ENCODE measurements at regions of chr18 and their contacts with region 1.

Region 1: DNA sequence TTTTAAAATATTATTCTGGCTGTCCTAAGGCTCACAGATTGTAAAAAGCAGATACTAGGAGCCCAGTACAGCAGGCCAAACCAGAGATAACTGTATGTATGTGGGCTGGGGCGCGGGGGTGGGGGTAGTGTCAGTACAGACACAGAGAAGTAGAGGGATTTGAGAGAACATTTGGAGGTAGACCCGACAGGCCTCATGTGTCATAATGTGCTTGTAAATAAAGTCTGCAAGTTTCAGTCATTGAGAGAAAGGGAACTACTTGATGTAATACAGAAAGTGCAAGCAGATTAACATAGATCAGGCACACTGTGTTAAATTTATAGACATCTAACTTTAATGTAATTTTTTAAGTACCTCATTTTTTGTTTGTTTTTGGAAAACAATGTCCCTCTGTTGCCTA is 7.4 kb upstream of the POLI start:
- DNase-seq: no peak
- H3K4me3 Mint-ChIP-seq: no peak overlapping the region
- H3K27ac Mint-ChIP-seq: peak overlapping the region; percentile 95
- H3K4me1 Mint-ChIP-seq: peaks cover 45% of the 10 kb centered on the region
- H3K27me3 Mint-ChIP-seq: no peaks in the 10 kb centered on the region

Region 2: DNA sequence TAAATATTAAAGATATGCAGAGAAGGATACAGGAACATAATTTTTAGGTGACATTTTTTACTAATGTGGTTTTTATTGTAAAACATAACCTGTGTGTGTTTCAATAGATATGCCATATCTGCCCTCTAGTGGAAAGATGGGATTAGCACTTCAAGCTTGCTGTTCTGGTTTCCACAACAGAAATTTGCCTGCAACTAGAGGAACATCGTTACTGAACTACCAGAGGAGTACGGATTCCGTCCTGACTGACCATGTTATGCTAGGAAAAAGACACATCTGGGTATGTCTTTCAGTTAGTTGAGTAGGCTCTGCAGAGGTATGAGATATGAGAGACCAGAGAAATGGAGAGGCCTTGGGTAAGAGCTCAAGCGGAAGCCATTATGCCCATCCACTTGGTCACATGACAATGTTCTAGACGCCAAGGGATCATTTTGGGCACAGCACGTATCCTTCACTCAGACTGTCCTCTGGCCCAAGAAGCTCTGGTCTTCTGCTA is 142.3 kb before region 1 on chr18:
- intact Hi-C with region 1: no loop called
- DNase-seq: peak; percentile 9
- H3K4me3 Mint-ChIP-seq: peak overlapping the region; percentile 4
- H3K27ac Mint-ChIP-seq: no peak overlapping the region
- H3K4me1 Mint-ChIP-seq: peaks cover 7% of the 10 kb centered on the region
- H3K27me3 Mint-ChIP-seq: peaks cover 15% of the 10 kb centered on the region

Region 3: DNA sequence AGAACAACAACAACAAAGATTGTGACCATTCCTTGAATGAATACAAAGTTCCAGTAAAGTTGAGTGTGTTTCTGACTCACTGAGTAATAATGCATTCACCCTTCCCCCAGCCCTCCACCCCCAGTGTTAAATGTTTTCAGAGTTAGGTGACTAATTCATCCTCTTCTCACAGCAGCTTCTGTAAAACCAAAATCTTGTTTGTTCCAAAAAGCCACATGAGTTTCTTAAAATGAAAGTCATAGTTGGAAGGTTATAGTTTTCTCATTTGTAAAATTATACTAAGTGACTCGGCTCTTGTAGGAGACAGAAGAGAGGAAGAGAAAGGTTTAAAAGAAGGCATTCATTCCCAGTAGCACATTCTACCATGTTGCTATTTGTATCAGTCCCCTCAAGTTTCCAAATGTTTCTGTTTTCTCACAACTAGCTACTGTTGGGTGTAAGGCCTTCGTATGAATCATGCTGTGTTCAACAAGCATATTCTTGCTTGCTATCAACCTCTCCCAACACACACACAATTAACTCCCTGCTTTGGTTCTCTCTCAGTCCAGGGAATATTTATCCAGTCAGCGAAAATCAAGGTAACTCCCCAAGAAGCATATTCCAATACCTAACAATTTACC is 112.7 kb before region 1 on chr18:
- intact Hi-C with region 1: loop called (anchors 1 kb)
- DNase-seq: no peak
- H3K4me3 Mint-ChIP-seq: peak overlapping the region; percentile 43
- H3K27ac Mint-ChIP-seq: peak overlapping the region; percentile 94
- H3K4me1 Mint-ChIP-seq: peaks cover 48% of the 10 kb centered on the region
- H3K27me3 Mint-ChIP-seq: no peaks in the 10 kb centered on the region

Region 4: GRCh38 chr18:54181856-54182602 is 79.9 kb before region 1 on chr18:
- intact Hi-C with region 1: loop called (anchors 1 kb)
- DNase-seq: no peak
- H3K4me3 Mint-ChIP-seq: no peak overlapping the region
- H3K27ac Mint-ChIP-seq: no peak overlapping the region
- H3K4me1 Mint-ChIP-seq: peaks cover 11% of the 10 kb centered on the region
- H3K27me3 Mint-ChIP-seq: no peaks in the 10 kb centered on the region

Region 5: GRCh38 chr18:54224379-54225014 is 37.4 kb before region 1 on chr18 and contains the start of gene MBD2:
- intact Hi-C with region 1: loop called (anchors 1 kb)
- DNase-seq: peak; percentile 91
- H3K4me3 Mint-ChIP-seq: peak within 1 kb of the TSS; percentile 98
- H3K27ac Mint-ChIP-seq: peak within 1 kb of the TSS; percentile 95
- H3K4me1 Mint-ChIP-seq: peaks cover 44% of the 10 kb centered on the region
- H3K27me3 Mint-ChIP-seq: no peaks in the 10 kb centered on the region
- total RNA-seq, gene MBD2: 165 and 196 TPM in 2 replicates

Region 6: DNA sequence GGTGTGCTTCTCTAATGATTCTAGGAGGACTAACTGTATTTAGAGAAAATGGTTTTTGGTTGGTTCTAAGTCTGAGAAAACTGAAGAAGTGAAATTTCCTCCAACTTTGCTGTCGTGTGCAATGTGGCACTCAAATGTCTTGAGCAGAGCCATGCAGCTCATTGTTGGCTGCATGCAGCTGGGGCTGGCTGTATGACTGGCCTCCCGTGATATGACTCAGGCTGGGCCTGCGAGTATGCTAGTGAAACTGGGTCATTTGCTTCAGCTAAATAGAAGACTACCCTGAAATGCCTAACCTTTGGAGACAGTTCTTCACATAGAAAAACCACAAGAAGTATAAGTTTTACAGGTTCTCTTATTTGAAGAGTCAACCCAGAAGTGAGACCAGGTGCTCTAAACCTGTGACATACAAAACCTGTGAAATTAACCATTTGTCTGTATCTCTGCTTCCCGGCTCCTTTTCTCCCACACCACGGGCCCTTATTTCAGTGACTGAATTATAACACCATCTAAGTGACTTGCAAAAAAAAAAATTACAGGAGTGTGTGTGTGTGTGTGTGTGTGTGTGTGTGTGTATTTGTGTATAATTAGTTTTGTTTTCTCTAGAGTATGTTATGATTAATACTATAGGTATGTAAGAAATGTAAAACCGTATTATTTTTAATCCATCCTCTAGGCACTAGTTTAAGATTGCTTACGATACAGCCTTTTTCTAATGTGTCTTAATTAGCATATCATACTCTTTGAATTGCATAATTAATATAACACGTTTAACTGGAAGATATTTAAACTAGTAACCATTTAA is 23.3 kb after region 1 on chr18:
- intact Hi-C with region 1: loop called (anchors 1 kb)
- DNase-seq: peak; percentile 44
- H3K4me3 Mint-ChIP-seq: no peak overlapping the region
- H3K27ac Mint-ChIP-seq: peak overlapping the region; percentile 79
- H3K4me1 Mint-ChIP-seq: peaks cover 34% of the 10 kb centered on the region
- H3K27me3 Mint-ChIP-seq: no peaks in the 10 kb centered on the region

Region 7: DNA sequence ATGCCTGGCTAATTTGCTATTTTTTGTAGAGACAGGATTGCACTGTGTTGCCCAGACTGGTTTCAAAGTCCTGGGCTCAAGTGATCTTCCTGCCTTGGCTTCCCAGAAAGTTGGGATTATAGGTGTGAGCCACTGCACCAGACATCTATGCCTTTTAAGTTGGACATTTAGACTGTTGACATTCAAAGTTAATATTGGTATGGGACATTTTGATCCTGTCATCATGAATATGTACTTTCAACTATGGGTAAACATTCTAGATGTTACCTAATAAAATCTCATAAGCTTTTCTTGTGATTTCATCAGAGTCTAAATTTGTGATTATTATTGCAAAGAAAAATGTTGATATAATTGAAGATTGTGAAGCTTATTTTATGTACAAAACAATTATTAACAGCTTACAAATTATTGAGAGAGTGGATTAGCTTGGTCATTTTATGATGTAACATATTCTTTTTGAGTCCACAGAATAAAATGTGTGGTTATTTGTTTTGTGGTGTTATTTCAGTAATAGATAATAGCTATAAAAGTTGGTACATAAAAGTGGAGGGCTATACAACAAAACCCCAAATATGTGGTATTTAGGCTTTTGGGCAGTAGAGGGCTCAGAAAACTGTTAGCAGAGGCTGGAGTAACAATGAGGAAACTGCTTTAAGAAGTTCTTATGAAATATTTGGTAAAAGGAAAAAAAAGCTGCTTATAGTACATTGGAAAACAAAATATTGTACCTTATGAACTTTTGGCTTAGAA is 54.4 kb after region 1 on chr18:
- intact Hi-C with region 1: no loop called
- DNase-seq: no peak
- H3K4me3 Mint-ChIP-seq: no peak overlapping the region
- H3K27ac Mint-ChIP-seq: no peak overlapping the region
- H3K4me1 Mint-ChIP-seq: peaks cover 4% of the 10 kb centered on the region
- H3K27me3 Mint-ChIP-seq: peaks cover 35% of the 10 kb centered on the region

Region 8: DNA sequence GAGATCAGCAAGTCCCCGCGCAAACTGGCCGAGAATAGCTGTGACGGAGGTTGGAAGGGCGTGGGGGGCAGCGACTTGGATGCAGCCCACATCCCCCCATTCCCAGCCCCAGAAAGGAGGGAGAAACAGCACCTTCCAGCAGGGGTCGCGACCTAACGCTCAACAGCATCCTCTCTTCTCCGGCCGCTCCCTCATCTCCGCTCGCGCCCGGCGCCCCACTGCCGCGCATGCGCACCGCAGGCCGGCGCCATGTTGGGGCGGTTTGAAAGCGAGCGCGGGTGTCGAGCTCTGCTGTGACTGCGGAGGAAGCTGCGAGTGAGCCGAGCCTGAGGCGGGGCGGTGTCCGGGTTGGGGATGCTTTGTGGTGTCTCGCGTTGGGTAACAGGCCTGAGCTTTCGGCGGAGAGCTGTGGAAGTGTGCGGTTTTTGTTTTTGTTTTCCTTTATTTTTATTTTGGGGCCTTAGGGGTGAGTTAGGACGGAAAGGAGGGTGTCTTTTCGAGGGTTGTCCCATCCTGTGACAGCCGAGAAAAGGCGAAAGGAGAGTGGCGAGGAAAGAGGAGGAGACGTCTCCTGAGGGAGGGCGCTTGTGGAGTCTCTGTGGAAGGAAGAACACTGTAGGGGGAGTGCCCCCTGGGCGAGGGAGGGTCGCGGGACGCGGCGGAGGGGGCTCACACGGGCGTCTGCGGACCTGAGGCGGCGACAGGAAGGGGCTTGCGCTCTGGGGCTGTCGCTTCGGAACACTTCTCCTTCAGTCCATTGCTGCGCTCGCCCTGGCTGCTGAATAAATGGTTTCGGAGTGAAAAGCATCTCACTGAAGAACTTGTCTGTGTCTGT is 96.0 kb after region 1 on chr18 and contains the starts of genes C18orf54 and STARD6:
- intact Hi-C with region 1: loop called (anchors 1 kb)
- DNase-seq: peak; percentile 90
- H3K4me3 Mint-ChIP-seq: peak within 1 kb of the TSS; percentile 99
- H3K27ac Mint-ChIP-seq: peak within 1 kb of the TSS; percentile 97
- H3K4me1 Mint-ChIP-seq: peaks cover 21% of the 10 kb centered on the region
- H3K27me3 Mint-ChIP-seq: no peaks in the 10 kb centered on the region
- total RNA-seq, gene C18orf54: 10.4 and 10.9 TPM in 2 replicates
- total RNA-seq, gene STARD6: not detected in 2 replicates

Region 9: DNA sequence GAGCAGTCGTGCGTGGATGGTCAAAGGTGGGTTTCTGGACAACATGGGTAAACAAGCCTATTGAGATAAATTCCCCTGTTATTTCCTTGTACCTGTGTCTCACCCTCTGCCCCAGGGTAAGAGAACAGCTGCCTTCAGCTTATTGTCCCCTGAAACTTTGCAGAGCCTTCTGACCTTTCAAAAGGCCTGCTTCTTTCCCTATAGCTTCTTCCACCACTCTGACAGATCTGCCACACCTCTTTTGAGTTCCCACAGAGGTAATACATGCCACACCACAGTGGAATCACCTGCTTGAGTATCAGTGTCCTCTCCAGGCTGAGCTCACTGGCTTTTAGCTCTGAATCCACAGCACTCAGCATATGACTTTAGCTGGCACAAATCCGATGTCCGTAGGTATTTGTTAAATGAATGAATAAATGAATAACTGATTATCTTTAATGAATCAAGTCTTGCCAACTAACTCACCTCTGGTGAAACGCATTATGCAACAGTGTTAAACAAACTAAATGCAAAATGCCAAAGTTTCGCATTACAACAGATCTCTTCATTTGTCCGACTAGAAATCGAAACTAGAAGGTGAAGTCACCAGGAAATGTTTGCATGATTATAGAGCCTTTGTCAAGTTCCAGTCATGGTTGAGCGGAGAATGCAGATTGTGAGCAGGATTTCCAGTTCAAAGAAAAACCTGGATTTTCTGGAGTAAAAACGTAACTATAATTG is 345.5 kb after region 1 on chr18:
- intact Hi-C with region 1: no loop called
- DNase-seq: no peak
- H3K4me3 Mint-ChIP-seq: no peak overlapping the region
- H3K27ac Mint-ChIP-seq: no peak overlapping the region
- H3K4me1 Mint-ChIP-seq: peaks cover 2% of the 10 kb centered on the region
- H3K27me3 Mint-ChIP-seq: no peaks in the 10 kb centered on the region

Region 10: GRCh38 chr18:54805571-54806334 is 543.9 kb after region 1 on chr18:
- intact Hi-C with region 1: loop called (anchors 2 kb)
- DNase-seq: no peak
- H3K4me3 Mint-ChIP-seq: no peak overlapping the region
- H3K27ac Mint-ChIP-seq: peak overlapping the region; percentile 64
- H3K4me1 Mint-ChIP-seq: peaks cover 22% of the 10 kb centered on the region
- H3K27me3 Mint-ChIP-seq: peaks cover 22% of the 10 kb centered on the region